ENCODE measurements at regions of chr9 and their contacts with region 1.

Region 1: DNA sequence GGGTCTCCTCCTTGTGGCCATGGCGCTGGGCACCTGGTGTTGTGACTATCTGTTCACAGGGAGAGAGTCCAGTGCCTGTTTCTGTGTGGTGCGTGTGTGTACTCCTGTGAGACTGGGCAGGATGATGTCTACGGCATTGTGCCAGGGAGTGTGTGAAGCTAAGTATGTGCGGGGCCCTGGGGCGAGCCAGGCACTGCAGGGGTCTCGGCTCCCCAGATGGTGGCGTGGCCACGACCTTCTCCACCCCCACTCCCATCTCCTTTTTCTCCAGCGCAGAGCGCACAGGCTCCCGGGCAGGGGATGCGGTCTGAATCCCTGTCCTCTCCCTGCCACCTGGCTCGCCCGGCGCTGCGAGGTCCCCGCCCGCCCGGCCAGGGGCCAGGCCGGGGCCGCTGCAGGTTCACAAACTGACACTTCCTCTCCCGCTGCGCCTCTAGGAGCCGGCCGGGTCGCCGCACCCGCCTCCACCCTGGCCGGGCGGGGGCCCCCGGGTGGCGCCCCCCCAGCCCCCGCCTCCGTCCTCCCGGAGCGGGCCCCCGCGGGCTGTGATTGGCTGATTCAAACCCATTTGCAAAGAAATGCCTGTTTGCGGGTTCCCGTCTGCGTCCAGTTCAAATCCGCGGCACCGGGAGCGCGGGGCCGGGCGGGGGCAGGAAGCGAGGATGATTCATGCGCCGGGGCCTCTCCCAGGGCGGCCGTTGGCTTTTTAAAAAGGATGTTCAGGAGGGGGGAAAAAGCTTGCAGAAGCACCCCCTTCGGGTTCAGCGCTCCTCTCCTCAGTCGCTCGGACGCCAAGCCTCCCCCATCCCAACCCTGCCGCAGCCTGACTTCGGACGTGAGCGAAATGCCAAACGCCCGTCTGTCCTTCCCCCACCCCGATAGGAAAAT is 790 bp downstream of the PHF19 start:
- DNase-seq: peak; percentile 64 to 88 (median 75)
- H3K4me3 ChIP-seq: peak overlapping the region; percentile 57
- H3K4me3 Mint-ChIP-seq: peak overlapping the region; percentile 63 to 93 (median 82)
- H3K27ac ChIP-seq: peak overlapping the region; percentile 86
- H3K27ac Mint-ChIP-seq: peak overlapping the region; percentile 66 to 99 (median 93)
- H3K4me1 ChIP-seq: peaks cover 46% of the 10 kb centered on the region
- H3K4me1 Mint-ChIP-seq: peaks cover 39 to 74% (median 61%) of the 10 kb centered on the region in 3 donors
- H3K27me3 ChIP-seq: no peaks in the 10 kb centered on the region
- H3K27me3 Mint-ChIP-seq: peaks cover 0 to 2% of the 10 kb centered on the region in 2 donors

Region 2: DNA sequence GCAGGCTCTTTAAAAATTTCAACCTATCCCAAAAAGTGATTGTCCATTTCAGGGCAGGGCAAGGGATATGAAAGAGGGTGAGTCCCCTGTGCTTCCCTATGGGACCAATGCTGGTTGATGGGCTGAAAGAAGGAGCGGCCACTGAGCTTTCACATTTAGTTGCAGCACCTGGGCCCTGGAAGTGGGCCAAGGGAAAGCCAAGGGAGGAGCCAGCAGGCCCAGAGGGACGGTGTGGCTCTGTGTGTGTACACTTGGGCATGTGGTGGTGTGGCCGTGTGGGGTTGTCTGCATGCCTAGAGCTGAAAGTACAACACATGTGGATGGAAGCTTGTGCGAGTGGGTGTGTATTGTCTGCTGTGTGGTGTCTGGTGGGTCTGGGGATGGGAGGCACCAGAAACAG is 19.5 kb before region 1 on chr9:
- CTCF ChIA-PET with region 1: no interaction called
- POLR2A ChIA-PET with region 1: no interaction called
- DNase-seq: no peak
- H3K4me3 ChIP-seq: no peak overlapping the region
- H3K4me3 Mint-ChIP-seq: no peak overlapping the region
- H3K27ac ChIP-seq: no peak overlapping the region
- H3K27ac Mint-ChIP-seq: peak overlapping the region in 4 of 8 donors; percentile 1 to 32 (median 16)
- H3K4me1 ChIP-seq: no peaks in the 10 kb centered on the region
- H3K4me1 Mint-ChIP-seq: peaks cover 0 to 17% (median 8%) of the 10 kb centered on the region in 3 donors
- H3K27me3 ChIP-seq: no peaks in the 10 kb centered on the region
- H3K27me3 Mint-ChIP-seq: no peaks in the 10 kb centered on the region

Region 3: GRCh38 chr9:120928483-120929228 is 52.5 kb after region 1 on chr9:
- CTCF ChIA-PET with region 1: interaction called, 363 read pairs
- POLR2A ChIA-PET with region 1: interaction called, 24 read pairs
- DNase-seq: peak; percentile 65 to 89 (median 79)
- H3K4me3 ChIP-seq: peak overlapping the region; percentile 76
- H3K4me3 Mint-ChIP-seq: peak overlapping the region; percentile 91 to 99 (median 96)
- H3K27ac ChIP-seq: peak overlapping the region; percentile 85
- H3K27ac Mint-ChIP-seq: peak overlapping the region; percentile 95 to 100 (median 99)
- H3K4me1 ChIP-seq: peaks cover 86% of the 10 kb centered on the region
- H3K4me1 Mint-ChIP-seq: peaks cover 82 to 90% (median 85%) of the 10 kb centered on the region in 3 donors
- H3K27me3 ChIP-seq: no peaks in the 10 kb centered on the region
- H3K27me3 Mint-ChIP-seq: no peaks in the 10 kb centered on the region